ENCODE measurements at regions of chr10 and their contacts with region 1.

Region 1: DNA sequence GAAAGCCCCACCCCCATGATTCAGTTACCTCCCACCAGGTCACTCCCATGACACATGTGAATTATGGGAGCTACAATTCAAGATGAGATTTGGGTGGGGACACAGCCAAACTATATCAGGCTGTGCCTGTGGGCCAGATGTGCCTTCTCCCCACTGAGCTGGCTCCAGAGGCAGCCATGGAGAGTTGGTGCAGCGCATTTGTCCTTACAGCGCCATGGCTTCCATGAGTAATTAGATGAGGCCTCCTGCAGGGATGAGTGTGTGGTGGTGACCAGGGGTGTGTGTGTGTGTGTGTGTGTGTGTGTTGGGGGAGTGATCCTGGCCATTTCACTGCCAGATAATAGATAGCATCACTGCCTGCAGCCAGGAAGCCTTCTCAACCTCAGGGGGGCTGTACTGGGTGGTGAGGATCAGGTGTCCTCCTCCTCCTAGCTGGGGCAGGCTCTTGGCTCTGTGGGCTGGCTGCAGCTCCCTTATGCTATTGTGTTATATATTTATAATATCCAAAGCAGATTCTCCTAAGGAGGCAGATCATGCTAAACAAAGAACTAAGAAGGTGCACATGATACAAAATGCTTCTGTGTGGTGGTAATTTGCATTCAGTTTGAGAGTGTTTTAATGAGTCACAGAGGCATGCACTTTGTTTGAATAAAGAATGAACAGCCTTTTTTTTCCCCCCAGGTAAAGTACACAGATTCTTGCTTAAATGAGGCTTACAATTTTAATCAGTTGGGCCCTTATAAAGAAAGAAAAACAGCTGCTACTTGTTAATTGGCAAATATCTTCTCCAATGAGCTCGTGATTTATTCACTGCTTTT is 94.8 kb downstream of the FANK1 start:
- DNase-seq: no peak

Region 2: GRCh38 chr10:125620401-125620800 is 370.8 kb before region 1 on chr10:
- intact Hi-C with region 1: no loop called
- DNase-seq: no peak

Region 3: DNA sequence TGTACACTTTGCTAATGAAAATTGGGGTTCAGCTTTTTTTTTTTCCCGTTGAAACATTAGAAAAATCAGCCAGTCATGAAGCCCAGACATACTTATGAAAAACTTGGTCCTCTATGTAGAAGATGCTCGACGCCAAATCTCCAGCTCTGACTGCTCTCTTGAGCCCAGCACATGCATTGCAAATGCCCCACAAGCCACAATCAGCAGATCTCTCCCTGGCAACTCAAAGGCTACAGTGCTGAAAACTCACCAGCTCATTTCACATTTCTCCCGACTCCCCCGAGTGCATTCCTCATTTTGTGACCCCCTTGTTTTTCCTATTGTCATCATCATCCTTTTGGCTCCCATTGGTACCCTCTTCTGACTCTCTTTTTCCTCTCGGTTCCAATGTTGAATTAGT is 300.8 kb after region 1 on chr10:
- intact Hi-C with region 1: loop called in 1 of 2 experiments (anchors 2 kb)
- DNase-seq: no peak

Measured in posterior vena cava (tissue), 2 donors.